ENCODE measurements at regions of chr10 and their contacts with region 1.

Region 1: DNA sequence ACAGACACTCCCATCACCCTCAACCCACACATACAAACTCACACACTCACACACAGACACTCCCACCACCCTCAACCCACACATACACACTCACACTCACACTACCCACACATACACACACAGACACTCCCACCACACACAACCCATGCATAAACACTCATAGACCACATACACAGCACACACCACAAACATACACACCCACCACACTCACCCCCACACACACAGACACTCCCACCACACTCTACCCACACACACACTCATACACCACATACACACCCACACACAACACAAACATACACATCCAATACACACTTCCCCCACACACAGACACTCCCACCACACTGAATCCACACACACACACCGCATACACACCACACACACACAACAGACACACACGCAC is 521.2 kb downstream of the TCERG1L start:
- DNase-seq: no peak
- H3K4me3 ChIP-seq: no peak overlapping the region
- H3K27ac ChIP-seq: no peak overlapping the region
- H3K4me1 ChIP-seq: no peaks in the 10 kb centered on the region
- H3K27me3 ChIP-seq: no peaks in the 10 kb centered on the region
- CTCF ChIP-seq: no peak
- EP300 ChIP-seq: no peak
- POLR2A ChIP-seq: no peak

Region 2: DNA sequence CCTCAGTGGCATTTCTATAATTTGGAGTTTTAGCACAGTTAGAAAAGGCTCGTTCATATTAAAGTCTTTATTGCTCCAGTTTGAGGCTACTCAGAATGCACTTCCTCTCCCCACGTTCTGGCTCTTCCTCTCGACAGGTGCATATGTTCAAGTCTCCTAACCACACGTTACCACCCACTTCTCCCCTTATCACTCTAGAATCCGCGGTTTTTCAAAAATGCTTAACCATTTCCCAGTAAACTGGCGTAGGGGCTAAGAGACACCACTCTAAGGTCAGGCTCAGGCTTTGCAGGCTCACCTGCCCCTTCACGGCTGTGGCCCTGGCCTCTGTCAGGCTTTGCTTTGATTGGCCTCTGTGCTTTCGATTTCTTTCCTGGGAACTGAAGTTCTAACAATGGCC is 270.5 kb before region 1 on chr10:
- intact Hi-C with region 1: loop called in 1 of 4 experiments (anchors 10 kb)
- DNase-seq: no peak
- H3K4me3 ChIP-seq: no peak overlapping the region
- H3K27ac ChIP-seq: no peak overlapping the region
- H3K4me1 ChIP-seq: no peaks in the 10 kb centered on the region
- H3K27me3 ChIP-seq: no peaks in the 10 kb centered on the region
- CTCF ChIP-seq: no peak
- EP300 ChIP-seq: no peak
- POLR2A ChIP-seq: no peak

Region 3: GRCh38 chr10:130834170-130834569 is 43.8 kb after region 1 on chr10:
- intact Hi-C with region 1: no loop called
- DNase-seq: no peak
- H3K4me3 ChIP-seq: no peak overlapping the region
- H3K27ac ChIP-seq: no peak overlapping the region
- H3K4me1 ChIP-seq: no peaks in the 10 kb centered on the region
- H3K27me3 ChIP-seq: no peaks in the 10 kb centered on the region
- CTCF ChIP-seq: no peak
- EP300 ChIP-seq: no peak
- POLR2A ChIP-seq: no peak

Region 4: GRCh38 chr10:130914367-130914766 is 124.0 kb after region 1 on chr10:
- intact Hi-C with region 1: no loop called
- DNase-seq: no peak
- H3K4me3 ChIP-seq: no peak overlapping the region
- H3K27ac ChIP-seq: no peak overlapping the region
- H3K4me1 ChIP-seq: no peaks in the 10 kb centered on the region
- H3K27me3 ChIP-seq: no peaks in the 10 kb centered on the region
- CTCF ChIP-seq: no peak
- EP300 ChIP-seq: no peak
- POLR2A ChIP-seq: no peak

Region 5: GRCh38 chr10:132023092-132023811 is 1232.9 kb after region 1 on chr10:
- intact Hi-C with region 1: loop called in 1 of 4 experiments (anchors 5 kb)
- DNase-seq: peak; percentile 80 to 93 (median 90)
- H3K4me3 ChIP-seq: peak overlapping the region; percentile 11
- H3K27ac ChIP-seq: no peak overlapping the region
- H3K4me1 ChIP-seq: peaks cover 2% of the 10 kb centered on the region
- H3K27me3 ChIP-seq: no peaks in the 10 kb centered on the region
- CTCF ChIP-seq: peak; percentile 89 to 94 (median 91)
- EP300 ChIP-seq: no peak
- POLR2A ChIP-seq: no peak

Measured in ovary (tissue), 10 donors.